Activated naive CD4-positive, alpha-beta T cell treated with anti-CD3 and anti-CD28 coated beads, Interleukin-2, amount 10 ng/mL, durations not matched to agents 7 days and 5 days (primary cell): ENCODE measurements at regions of chr1 and their contacts with region 1.

Region 1: DNA sequence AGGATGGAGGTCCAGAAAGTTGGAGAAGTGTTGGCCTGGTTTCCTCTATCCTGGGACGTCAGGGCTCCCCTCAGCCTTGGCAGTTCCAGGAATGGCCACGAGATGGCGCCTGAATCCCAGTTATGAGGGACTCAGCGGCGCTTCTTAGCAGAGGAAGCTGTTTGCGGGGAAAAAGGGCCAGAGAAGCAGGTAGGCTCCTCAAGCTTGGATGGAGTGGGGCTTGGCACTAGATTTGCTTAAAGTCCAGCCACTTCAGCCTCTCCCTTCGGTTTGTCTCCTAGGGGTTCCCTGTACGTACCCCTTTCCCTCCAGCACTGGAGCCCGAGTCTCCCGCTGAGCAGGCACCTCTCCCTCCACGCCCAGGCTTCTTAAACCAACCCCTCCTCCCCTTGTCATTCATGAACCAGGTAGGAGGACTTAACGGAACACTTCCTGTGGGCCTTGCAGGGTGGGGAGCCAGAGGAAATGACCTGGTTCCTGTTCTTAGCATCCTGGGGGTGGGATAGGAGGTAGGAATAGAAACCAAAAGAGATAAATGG is 32.0 kb upstream of the TENT5B start:
- DNase-seq: peak; percentile 93
- H3K4me3 Mint-ChIP-seq: peak overlapping the region; percentile 65
- H3K27ac Mint-ChIP-seq: peak overlapping the region; percentile 82
- H3K4me1 Mint-ChIP-seq: peaks cover 22% of the 10 kb centered on the region
- H3K27me3 Mint-ChIP-seq: peaks cover 25% of the 10 kb centered on the region

Region 2: GRCh38 chr1:27033043-27033746 is 11.5 kb before region 1 on chr1:
- CTCF ChIA-PET with region 1: interaction called, 40 read pairs
- DNase-seq: no peak
- H3K4me3 Mint-ChIP-seq: no peak overlapping the region
- H3K27ac Mint-ChIP-seq: no peak overlapping the region
- H3K4me1 Mint-ChIP-seq: peaks cover 3% of the 10 kb centered on the region
- H3K27me3 Mint-ChIP-seq: peaks cover 25% of the 10 kb centered on the region

Region 3: GRCh38 chr1:27097484-27097917 is 52.8 kb after region 1 on chr1:
- CTCF ChIA-PET with region 1: interaction called, 367 read pairs
- DNase-seq: peak; percentile 82
- H3K4me3 Mint-ChIP-seq: no peak overlapping the region
- H3K27ac Mint-ChIP-seq: peak overlapping the region; percentile 6
- H3K4me1 Mint-ChIP-seq: peaks cover 5% of the 10 kb centered on the region
- H3K27me3 Mint-ChIP-seq: peaks cover 4% of the 10 kb centered on the region

Region 4: DNA sequence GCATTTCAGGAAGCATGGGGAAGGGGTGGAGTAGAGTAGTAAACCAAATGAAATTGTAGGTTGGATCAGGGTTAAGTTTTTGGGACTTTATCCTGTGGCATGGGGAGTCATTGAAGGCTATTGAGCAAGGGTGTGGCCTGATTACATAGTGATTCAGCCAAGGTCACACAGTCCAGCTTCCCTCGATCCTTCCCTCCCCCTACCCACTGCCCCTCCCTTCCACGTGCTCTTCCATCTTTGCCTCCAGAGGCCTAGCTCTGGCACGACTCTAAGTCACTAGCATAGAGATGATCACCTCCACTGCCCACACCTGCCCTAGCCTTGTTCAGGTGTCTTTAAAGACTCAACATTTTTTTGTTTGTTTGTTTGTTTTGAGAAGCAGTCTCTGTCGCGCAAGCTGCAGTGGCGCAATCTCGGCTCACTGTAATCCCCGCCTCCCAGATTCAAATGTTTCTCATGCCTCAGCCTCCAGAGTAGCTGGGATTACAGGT is 147.4 kb after region 1 on chr1:
- CTCF ChIA-PET with region 1: interaction called, 12 read pairs
- DNase-seq: no peak
- H3K4me3 Mint-ChIP-seq: no peak overlapping the region
- H3K27ac Mint-ChIP-seq: no peak overlapping the region
- H3K4me1 Mint-ChIP-seq: no peaks in the 10 kb centered on the region
- H3K27me3 Mint-ChIP-seq: peaks cover 21% of the 10 kb centered on the region